ENCODE measurements at regions of chr7 and their contacts with region 1.

Region 1: GRCh38 chr7:128209229-128210035 is 31.6 kb upstream of the LEP start:
- DNase-seq: peak; percentile 93
- H3K4me3 ChIP-seq: no peak overlapping the region
- H3K27ac ChIP-seq: no peak overlapping the region
- H3K4me1 ChIP-seq: peaks cover 0 to 3% of the 10 kb centered on the region in 2 experiments; a peak in 1 of 4 replicates
- H3K27me3 ChIP-seq: no peaks in the 10 kb centered on the region
- CTCF ChIP-seq: peak; percentile 99
- EP300 ChIP-seq: no peak
- RAD21 ChIP-seq: peak; percentile 100

Region 2: GRCh38 chr7:127708788-127709187 is 500.6 kb before region 1 on chr7:
- CTCF ChIA-PET with region 1: interaction called, 444 read pairs
- POLR2A ChIA-PET with region 1: interaction called, 6 read pairs
- DNase-seq: peak; percentile 61
- H3K4me3 ChIP-seq: no peak overlapping the region
- H3K27ac ChIP-seq: peak overlapping the region in 1 of 2 experiments; percentile 82; a peak in 3 of 4 replicates
- H3K4me1 ChIP-seq: peaks cover 10 to 17% of the 10 kb centered on the region in 2 experiments
- H3K27me3 ChIP-seq: no peaks in the 10 kb centered on the region
- CTCF ChIP-seq: peak; percentile 96
- EP300 ChIP-seq: no peak
- RAD21 ChIP-seq: peak; percentile 99

Region 3: GRCh38 chr7:127979728-127980126 is 229.7 kb before region 1 on chr7:
- CTCF ChIA-PET with region 1: interaction called, 10 read pairs
- POLR2A ChIA-PET with region 1: no interaction called
- DNase-seq: no peak
- H3K4me3 ChIP-seq: no peak overlapping the region
- H3K27ac ChIP-seq: no peak overlapping the region
- H3K4me1 ChIP-seq: peaks cover 0 to 12% of the 10 kb centered on the region in 2 experiments; a peak in 1 of 4 replicates
- H3K27me3 ChIP-seq: no peaks in the 10 kb centered on the region
- CTCF ChIP-seq: no peak
- EP300 ChIP-seq: no peak
- RAD21 ChIP-seq: no peak

Region 4: GRCh38 chr7:128066861-128067260 is 142.6 kb before region 1 on chr7:
- CTCF ChIA-PET with region 1: interaction called, 15 read pairs
- POLR2A ChIA-PET with region 1: no interaction called
- DNase-seq: no peak
- H3K4me3 ChIP-seq: no peak overlapping the region
- H3K27ac ChIP-seq: no peak overlapping the region
- H3K4me1 ChIP-seq: peaks cover 0 to 40% of the 10 kb centered on the region in 2 experiments; a peak in 1 of 4 replicates
- H3K27me3 ChIP-seq: no peaks in the 10 kb centered on the region
- CTCF ChIP-seq: peak; percentile 23; the same call in 1 of the 2 replicates
- EP300 ChIP-seq: no peak
- RAD21 ChIP-seq: peak; percentile 50

Region 5: DNA sequence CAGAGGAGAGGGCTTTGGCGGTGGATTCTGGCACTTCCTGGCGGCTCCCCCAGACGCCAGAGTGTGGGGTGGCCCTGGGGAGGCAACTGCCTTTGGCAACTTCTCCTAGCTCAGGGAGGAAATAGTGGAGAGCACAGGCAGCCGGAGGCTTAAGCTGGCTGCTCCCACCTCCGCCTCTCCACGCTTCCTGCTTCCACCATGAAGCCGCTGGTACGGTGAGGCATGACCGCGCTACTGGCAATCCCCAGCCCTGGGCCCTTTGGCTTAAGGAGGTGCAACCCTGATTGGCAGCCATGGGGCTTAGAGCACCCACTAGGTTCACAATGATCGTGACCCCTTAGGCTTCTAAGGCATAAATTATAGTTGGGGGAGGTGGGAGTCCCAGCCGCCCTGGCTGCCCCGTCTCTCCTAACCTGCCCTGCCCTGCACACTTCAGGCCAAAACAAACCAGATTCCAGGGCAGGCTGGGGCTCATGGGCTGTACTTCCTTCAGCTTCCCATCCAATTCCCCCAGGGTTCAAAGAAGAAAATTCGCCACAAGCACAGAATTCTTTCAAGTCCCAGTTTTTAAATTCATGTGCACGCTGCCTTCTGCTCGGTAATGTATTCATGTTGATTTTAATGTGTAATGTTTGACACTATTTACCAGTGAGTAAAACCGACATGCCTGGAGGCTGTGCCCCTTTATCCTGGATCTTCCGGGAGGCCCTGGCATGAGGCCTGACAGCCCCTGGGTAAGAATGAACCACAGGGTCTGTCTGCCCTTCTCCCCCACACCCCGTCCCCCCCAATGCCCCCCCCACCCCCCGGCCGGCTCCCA is 87.5 kb before region 1 on chr7:
- CTCF ChIA-PET with region 1: interaction called, 14 read pairs
- POLR2A ChIA-PET with region 1: no interaction called
- DNase-seq: no peak
- H3K4me3 ChIP-seq: no peak overlapping the region
- H3K27ac ChIP-seq: no peak overlapping the region
- H3K4me1 ChIP-seq: peaks cover 0 to 34% of the 10 kb centered on the region in 2 experiments; a peak in 1 of 4 replicates
- H3K27me3 ChIP-seq: peaks cover 21% of the 10 kb centered on the region
- CTCF ChIP-seq: no peak
- EP300 ChIP-seq: no peak
- RAD21 ChIP-seq: no peak

Region 6: GRCh38 chr7:128167042-128167691 is 42.3 kb before region 1 on chr7:
- CTCF ChIA-PET with region 1: interaction called, 175 read pairs
- POLR2A ChIA-PET with region 1: no interaction called
- DNase-seq: peak; percentile 96
- H3K4me3 ChIP-seq: peak overlapping the region; percentile 63 to 68
- H3K27ac ChIP-seq: no peak overlapping the region; a peak in 1 of 4 replicates
- H3K4me1 ChIP-seq: peaks cover 6 to 11% of the 10 kb centered on the region in 2 experiments; a peak in 2 of 4 replicates
- H3K27me3 ChIP-seq: no peaks in the 10 kb centered on the region; the same call in 1 of the 2 replicates
- CTCF ChIP-seq: no peak
- EP300 ChIP-seq: no peak
- RAD21 ChIP-seq: no peak

Region 7: GRCh38 chr7:128794020-128794419 is 584.6 kb after region 1 on chr7:
- CTCF ChIA-PET with region 1: no interaction called
- POLR2A ChIA-PET with region 1: no interaction called
- DNase-seq: no peak
- H3K4me3 ChIP-seq: no peak overlapping the region
- H3K27ac ChIP-seq: no peak overlapping the region
- H3K4me1 ChIP-seq: peaks cover 15 to 21% of the 10 kb centered on the region in 2 experiments
- H3K27me3 ChIP-seq: no peaks in the 10 kb centered on the region
- CTCF ChIP-seq: no peak
- EP300 ChIP-seq: no peak
- RAD21 ChIP-seq: no peak

Region 8: GRCh38 chr7:128883622-128884501 is 674.4 kb after region 1 on chr7:
- CTCF ChIA-PET with region 1: no interaction called
- POLR2A ChIA-PET with region 1: no interaction called
- DNase-seq: peak; percentile 96
- H3K4me3 ChIP-seq: no peak overlapping the region
- H3K27ac ChIP-seq: no peak overlapping the region
- H3K4me1 ChIP-seq: peaks cover 0 to 7% of the 10 kb centered on the region in 2 experiments; a peak in 1 of 4 replicates
- H3K27me3 ChIP-seq: no peaks in the 10 kb centered on the region
- CTCF ChIP-seq: peak; percentile 99
- EP300 ChIP-seq: no peak
- RAD21 ChIP-seq: peak; percentile 81